A549 (cell line): ENCODE measurements at regions of chr2 and their contacts with region 1.

Region 1: GRCh38 chr2:26088032-26088643 is 54.3 kb downstream of the RAB10 start:
- DNase-seq: peak; percentile 48 to 51
- ATAC-seq: peak; percentile 74 to 77; a peak in 5 of 6 replicates
- H3K4me3 ChIP-seq: no peak overlapping the region
- H3K27ac ChIP-seq: no peak overlapping the region
- H3K4me1 ChIP-seq: peaks cover 54% of the 10 kb centered on the region
- CTCF ChIP-seq: peak; percentile 77
- EP300 ChIP-seq: no peak
- POLR2A ChIP-seq: no peak
- RAD21 ChIP-seq: peak; percentile 70 to 81

Region 2: GRCh38 chr2:26064846-26065245 is 23.3 kb before region 1 on chr2:
- CTCF ChIA-PET with region 1: interaction called, 12 read pairs
- POLR2A ChIA-PET with region 1: no interaction called
- DNase-seq: peak in 1 of 2 experiments; percentile 70
- ATAC-seq: peak; percentile 49 to 54; a peak in 3 of 6 replicates
- H3K4me3 ChIP-seq: no peak overlapping the region
- H3K27ac ChIP-seq: peak overlapping the region in 1 of 2 experiments; percentile 33; a peak in 2 of 6 replicates
- H3K4me1 ChIP-seq: peaks cover 75% of the 10 kb centered on the region
- CTCF ChIP-seq: no peak
- EP300 ChIP-seq: no peak
- POLR2A ChIP-seq: no peak
- RAD21 ChIP-seq: no peak

Region 3: GRCh38 chr2:26072925-26073768 is 15.0 kb before region 1 on chr2:
- CTCF ChIA-PET with region 1: interaction called, 30 read pairs
- POLR2A ChIA-PET with region 1: no interaction called
- DNase-seq: peak in 1 of 2 experiments; percentile 45
- ATAC-seq: peak; percentile 26 to 51; a peak in 3 of 6 replicates
- H3K4me3 ChIP-seq: no peak overlapping the region
- H3K27ac ChIP-seq: peak overlapping the region in 1 of 2 experiments; percentile 21; a peak in 3 of 6 replicates
- H3K4me1 ChIP-seq: peaks cover 97% of the 10 kb centered on the region
- CTCF ChIP-seq: no peak
- EP300 ChIP-seq: no peak
- POLR2A ChIP-seq: no peak
- RAD21 ChIP-seq: no peak

Region 4: GRCh38 chr2:26099933-26100332 is 11.8 kb after region 1 on chr2:
- CTCF ChIA-PET with region 1: interaction called, 10 read pairs
- POLR2A ChIA-PET with region 1: no interaction called
- DNase-seq: no peak
- ATAC-seq: no peak
- H3K4me3 ChIP-seq: no peak overlapping the region
- H3K27ac ChIP-seq: no peak overlapping the region
- H3K4me1 ChIP-seq: peaks cover 23% of the 10 kb centered on the region
- CTCF ChIP-seq: no peak
- EP300 ChIP-seq: no peak
- POLR2A ChIP-seq: no peak
- RAD21 ChIP-seq: no peak

Region 5: GRCh38 chr2:26126074-26126473 is 37.9 kb after region 1 on chr2:
- CTCF ChIA-PET with region 1: interaction called, 11 read pairs
- POLR2A ChIA-PET with region 1: no interaction called
- DNase-seq: no peak
- ATAC-seq: no peak
- H3K4me3 ChIP-seq: no peak overlapping the region
- H3K27ac ChIP-seq: 0 out of 6 replicates have a peak overlapping the region, but pooled peaks of 1 of the 2 experiments have one; percentile 1
- H3K4me1 ChIP-seq: peaks cover 43% of the 10 kb centered on the region
- CTCF ChIP-seq: no peak
- EP300 ChIP-seq: no peak
- POLR2A ChIP-seq: no peak
- RAD21 ChIP-seq: no peak

Region 6: GRCh38 chr2:26139269-26140183 is 51.4 kb after region 1 on chr2:
- CTCF ChIA-PET with region 1: interaction called, 13 read pairs
- POLR2A ChIA-PET with region 1: no interaction called
- DNase-seq: peak in 1 of 2 experiments; percentile 44
- ATAC-seq: peak; percentile 28 to 42
- H3K4me3 ChIP-seq: no peak overlapping the region
- H3K27ac ChIP-seq: no peak overlapping the region; a peak in 1 of 6 replicates
- H3K4me1 ChIP-seq: peaks cover 14% of the 10 kb centered on the region
- CTCF ChIP-seq: no peak
- EP300 ChIP-seq: no peak
- POLR2A ChIP-seq: no peak
- RAD21 ChIP-seq: no peak

Region 7: DNA sequence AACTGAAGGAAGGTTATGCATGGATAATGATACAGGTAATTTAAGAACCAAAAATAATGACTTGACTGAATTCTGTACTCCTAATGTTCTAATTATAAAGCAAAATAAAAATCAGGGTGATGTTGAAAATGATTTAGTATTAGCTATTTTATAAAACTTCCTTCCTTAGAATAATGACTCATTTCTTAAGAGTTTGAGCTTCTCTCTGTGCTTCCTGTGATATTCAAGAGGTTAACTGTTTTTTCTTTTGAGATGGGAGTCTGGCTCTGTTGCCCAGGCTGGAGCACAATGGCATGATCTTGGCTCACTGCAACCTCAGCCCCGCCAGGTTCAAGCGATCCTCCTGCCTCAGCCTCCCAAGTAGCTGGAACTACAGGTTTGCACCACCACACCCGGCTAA is 141.5 kb after region 1 on chr2:
- CTCF ChIA-PET with region 1: no interaction called
- POLR2A ChIA-PET with region 1: no interaction called
- DNase-seq: no peak
- ATAC-seq: no peak
- H3K4me3 ChIP-seq: no peak overlapping the region
- H3K27ac ChIP-seq: no peak overlapping the region
- H3K4me1 ChIP-seq: no peaks in the 10 kb centered on the region
- CTCF ChIP-seq: no peak
- EP300 ChIP-seq: no peak
- POLR2A ChIP-seq: no peak
- RAD21 ChIP-seq: no peak